IMR-90 (cell line): ENCODE measurements at regions of chr13 and their contacts with region 1.

Region 1: GRCh38 chr13:82098813-82099212 is 1757.9 kb upstream of the SPRY2 start:
- DNase-seq: no peak
- ATAC-seq: no peak
- H3K4me3 ChIP-seq: no peak overlapping the region
- H3K27ac ChIP-seq: no peak overlapping the region
- H3K4me1 ChIP-seq: no peaks in the 10 kb centered on the region
- H3K27me3 ChIP-seq: no peaks in the 10 kb centered on the region
- CTCF ChIP-seq: no peak
- POLR2A ChIP-seq: no peak
- RAD21 ChIP-seq: no peak

Region 2: DNA sequence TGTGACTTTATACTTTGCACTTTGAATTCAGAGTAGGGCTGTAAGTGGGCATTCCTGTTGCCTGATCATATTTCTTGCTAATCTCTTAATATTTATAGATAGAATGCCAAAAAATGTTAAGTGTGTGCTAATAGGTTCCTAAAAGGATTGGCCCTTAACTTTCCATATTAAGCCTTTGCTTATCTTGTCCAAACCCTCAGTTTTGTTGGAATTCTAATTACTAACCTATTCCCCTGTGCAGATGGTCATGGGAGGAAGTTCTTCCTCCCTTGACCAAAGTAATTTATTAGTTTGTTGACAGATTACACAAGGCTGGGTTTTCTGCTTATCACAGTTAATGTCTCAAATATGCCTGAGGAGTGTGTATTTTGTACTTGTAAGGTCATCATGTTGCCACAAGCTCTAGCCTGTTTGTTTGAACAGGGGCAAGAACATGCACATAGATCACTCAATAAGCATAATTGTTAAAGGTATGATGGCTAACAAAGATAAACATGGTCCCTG is 1216.8 kb before region 1 on chr13:
- CTCF ChIA-PET with region 1: no interaction called
- POLR2A ChIA-PET with region 1: no interaction called
- dilution Hi-C with region 1: no loop called
- in situ Hi-C with region 1: no loop called
- intact Hi-C with region 1: loop called (anchors 10 kb)
- DNase-seq: no peak
- ATAC-seq: no peak
- H3K4me3 ChIP-seq: no peak overlapping the region
- H3K27ac ChIP-seq: no peak overlapping the region
- H3K4me1 ChIP-seq: no peaks in the 10 kb centered on the region
- H3K27me3 ChIP-seq: no peaks in the 10 kb centered on the region
- CTCF ChIP-seq: no peak
- POLR2A ChIP-seq: no peak
- RAD21 ChIP-seq: no peak

Region 3: DNA sequence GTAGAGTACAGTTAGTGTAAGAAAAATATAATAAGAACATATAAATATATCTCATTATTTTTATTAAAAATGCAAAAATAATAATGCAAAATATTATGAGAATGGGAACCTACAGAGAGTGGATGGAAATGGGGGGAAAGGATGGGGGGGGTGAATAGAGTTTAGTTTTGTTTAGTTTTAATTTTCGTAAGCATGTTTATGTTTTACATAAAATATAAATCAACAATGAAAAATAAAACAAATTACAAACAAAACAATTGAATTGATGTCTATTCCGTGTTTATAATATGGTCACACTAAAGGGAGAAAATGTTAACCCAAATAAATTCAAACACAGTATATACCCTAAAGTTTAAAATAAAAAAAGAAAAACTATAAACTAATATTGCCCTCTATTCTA is 40.4 kb before region 1 on chr13:
- CTCF ChIA-PET with region 1: no interaction called
- POLR2A ChIA-PET with region 1: no interaction called
- dilution Hi-C with region 1: no loop called
- in situ Hi-C with region 1: no loop called
- intact Hi-C with region 1: no loop called
- DNase-seq: no peak
- ATAC-seq: no peak
- H3K4me3 ChIP-seq: no peak overlapping the region
- H3K27ac ChIP-seq: no peak overlapping the region
- H3K4me1 ChIP-seq: no peaks in the 10 kb centered on the region
- H3K27me3 ChIP-seq: no peaks in the 10 kb centered on the region
- CTCF ChIP-seq: no peak
- POLR2A ChIP-seq: no peak
- RAD21 ChIP-seq: no peak

Region 4: DNA sequence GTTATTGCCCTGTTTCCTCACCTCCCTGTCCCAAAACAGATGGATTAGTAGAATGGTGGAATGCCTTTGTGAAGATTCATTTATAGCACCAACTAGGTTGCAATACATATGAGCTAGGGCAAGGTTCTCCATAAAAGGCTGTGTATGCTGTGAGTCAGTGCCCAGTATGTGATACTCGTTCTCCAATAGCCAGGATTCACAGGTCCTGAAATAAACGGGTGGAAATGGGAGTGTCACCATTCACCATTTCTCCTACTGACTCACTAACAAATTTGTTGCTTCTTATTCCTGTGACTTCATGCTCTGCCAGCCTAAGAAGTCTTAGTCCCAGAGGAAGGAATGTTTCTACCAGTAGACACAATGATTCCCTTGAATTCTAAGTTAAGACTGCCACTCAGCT is 38.1 kb after region 1 on chr13:
- CTCF ChIA-PET with region 1: no interaction called
- POLR2A ChIA-PET with region 1: no interaction called
- dilution Hi-C with region 1: no loop called
- in situ Hi-C with region 1: no loop called
- intact Hi-C with region 1: no loop called
- DNase-seq: no peak
- ATAC-seq: no peak
- H3K4me3 ChIP-seq: no peak overlapping the region
- H3K27ac ChIP-seq: no peak overlapping the region
- H3K4me1 ChIP-seq: no peaks in the 10 kb centered on the region
- H3K27me3 ChIP-seq: no peaks in the 10 kb centered on the region
- CTCF ChIP-seq: no peak
- POLR2A ChIP-seq: no peak
- RAD21 ChIP-seq: no peak

Region 5: DNA sequence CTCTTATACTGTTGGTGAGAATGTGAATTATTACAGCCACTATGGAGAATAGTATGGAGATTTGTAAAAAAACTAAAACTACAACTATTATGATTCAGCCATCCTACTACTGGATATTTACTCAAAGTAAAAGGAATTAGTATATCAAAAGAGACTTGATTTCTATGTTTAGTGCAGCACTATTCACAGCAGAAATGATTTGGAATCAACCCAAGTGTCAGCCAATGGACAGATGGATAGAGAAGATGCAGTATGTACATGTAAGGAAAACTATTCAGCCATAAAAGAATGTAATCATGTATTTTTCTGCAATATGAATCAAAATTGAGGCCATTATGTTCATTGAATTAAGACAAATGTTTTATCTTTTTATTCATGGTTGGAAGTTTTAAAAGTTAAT is 77.9 kb after region 1 on chr13:
- CTCF ChIA-PET with region 1: no interaction called
- POLR2A ChIA-PET with region 1: no interaction called
- dilution Hi-C with region 1: no loop called
- in situ Hi-C with region 1: no loop called
- intact Hi-C with region 1: no loop called
- DNase-seq: no peak
- ATAC-seq: no peak
- H3K4me3 ChIP-seq: no peak overlapping the region
- H3K27ac ChIP-seq: no peak overlapping the region
- H3K4me1 ChIP-seq: no peaks in the 10 kb centered on the region
- H3K27me3 ChIP-seq: no peaks in the 10 kb centered on the region
- CTCF ChIP-seq: no peak
- POLR2A ChIP-seq: no peak
- RAD21 ChIP-seq: no peak

Region 6: DNA sequence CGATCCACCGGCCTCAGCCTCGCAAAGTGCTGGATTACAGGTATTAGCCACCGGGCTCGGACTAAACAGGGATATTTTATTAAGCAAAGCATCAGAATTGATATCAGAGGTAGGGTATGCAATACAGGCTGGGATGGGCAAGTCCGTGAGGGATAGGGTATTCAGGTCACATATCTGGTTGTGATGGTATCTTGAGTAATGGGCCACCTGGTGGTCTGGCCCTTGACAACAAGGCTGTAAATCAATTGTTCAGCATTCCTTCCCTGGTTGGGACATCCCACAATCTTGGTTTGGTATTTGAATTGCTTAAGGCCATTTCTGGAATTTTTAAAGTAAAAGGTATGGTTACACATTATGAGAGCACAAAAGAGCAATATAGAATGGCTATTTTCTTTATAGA is 195.4 kb after region 1 on chr13:
- CTCF ChIA-PET with region 1: no interaction called
- POLR2A ChIA-PET with region 1: no interaction called
- dilution Hi-C with region 1: no loop called
- in situ Hi-C with region 1: no loop called
- intact Hi-C with region 1: no loop called
- DNase-seq: no peak
- ATAC-seq: no peak
- H3K4me3 ChIP-seq: no peak overlapping the region
- H3K27ac ChIP-seq: no peak overlapping the region
- H3K4me1 ChIP-seq: no peaks in the 10 kb centered on the region
- H3K27me3 ChIP-seq: no peaks in the 10 kb centered on the region
- CTCF ChIP-seq: no peak
- POLR2A ChIP-seq: no peak
- RAD21 ChIP-seq: no peak